GM12878 (cell line): ENCODE measurements at regions of chr1 and their contacts with region 1.

Region 1: DNA sequence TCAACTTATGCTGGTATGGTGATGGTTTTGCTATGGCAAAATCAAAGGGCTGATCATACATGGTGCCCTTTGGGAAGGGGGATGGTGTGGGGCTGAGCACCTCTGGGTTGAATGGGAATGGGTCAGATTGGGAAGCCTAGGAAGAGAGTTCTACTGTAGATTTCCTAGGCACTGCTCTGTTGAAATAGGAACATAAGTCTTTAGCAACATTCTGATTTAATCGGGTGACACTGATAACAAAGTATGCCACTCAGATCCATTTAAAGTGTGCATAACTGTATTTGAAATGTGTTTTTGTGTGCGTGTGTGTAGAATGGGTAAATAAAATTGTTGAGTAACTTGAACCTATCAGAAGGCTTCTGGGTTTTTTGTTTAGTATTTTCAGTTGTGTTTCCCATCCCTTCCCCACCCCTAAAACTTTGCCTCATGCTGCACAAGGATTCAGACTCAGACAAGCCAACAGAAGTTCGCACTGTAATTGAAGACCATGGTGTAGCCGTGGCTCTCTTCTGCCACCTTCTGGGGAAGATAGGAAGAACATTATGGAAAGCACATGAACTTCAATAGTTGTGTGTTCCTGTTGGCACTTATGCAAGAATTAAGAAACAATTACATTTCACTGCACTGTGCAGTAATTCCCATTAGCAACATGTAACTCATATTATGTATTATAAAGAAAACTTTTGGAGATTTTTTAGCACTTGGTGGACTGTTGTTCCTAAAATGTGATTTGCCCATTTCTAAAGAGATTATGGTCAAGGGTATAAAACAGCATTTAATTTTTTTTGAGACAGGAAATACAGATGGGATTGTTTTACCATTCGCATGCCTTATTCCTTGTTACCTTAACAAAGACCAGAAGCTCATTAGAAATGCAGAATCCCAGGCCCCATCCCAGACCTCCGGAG is 10.9 kb upstream of the C4BPB start:
- DNase-seq: peak; percentile 53
- ATAC-seq: peak; percentile 94
- H3K4me3 ChIP-seq: no peak overlapping the region
- H3K27ac ChIP-seq: no peak overlapping the region
- H3K4me1 ChIP-seq: no peaks in the 10 kb centered on the region
- H3K27me3 ChIP-seq: no peaks in the 10 kb centered on the region
- CTCF ChIP-seq: peak; percentile 85 to 95 (median 92); a peak in 5 of 6 replicates
- EP300 ChIP-seq: no peak
- POLR2A ChIP-seq: no peak
- RAD21 ChIP-seq: peak; percentile 94

Region 2: DNA sequence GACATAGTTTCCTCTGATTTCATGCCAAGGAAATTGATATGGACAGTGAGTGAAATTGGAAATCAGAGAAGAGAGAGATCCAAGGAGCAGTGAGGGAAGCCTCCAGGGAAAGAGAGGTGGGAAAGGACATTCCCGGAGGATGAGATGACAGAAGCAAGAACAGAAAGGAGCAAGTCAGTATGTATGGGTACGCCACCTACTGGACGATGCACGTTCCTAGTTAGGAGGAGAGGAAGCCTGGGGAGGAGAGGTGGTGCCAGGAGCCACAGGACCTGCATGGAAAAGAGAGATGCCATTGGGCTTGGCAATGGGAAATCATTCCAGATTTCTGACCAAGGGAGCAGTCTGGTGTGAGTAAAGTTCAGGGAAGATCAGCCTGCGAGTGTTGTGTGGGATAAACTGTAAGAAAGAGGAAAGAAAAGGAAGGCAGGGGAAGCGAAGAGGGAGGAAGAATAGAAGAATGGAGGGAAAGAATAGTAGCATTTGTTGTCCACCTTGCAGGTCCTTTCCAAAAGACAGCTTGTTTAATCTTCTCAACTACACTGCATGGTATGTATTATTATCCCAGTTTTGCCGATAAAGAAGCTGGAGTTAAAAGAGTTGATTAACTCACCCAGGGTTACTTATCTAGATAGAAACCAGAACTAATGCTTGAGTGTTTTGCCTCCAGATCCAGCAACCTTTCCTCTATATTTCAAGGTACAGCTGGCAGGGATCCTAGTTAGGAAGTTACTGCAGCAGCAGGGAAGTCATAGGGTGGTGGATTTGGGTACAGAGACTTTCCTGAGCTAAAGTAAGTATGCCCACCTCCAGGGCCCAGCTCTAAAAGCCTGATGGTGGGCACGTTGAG is 72.5 kb before region 1 on chr1:
- CTCF ChIA-PET with region 1: interaction called, 7 read pairs
- POLR2A ChIA-PET with region 1: no interaction called
- RAD21 ChIA-PET with region 1: no interaction called
- SMC1A ChIA-PET with region 1: interaction called, 4 read pairs
- in situ Hi-C with region 1: no loop called
- intact Hi-C with region 1: loop called (anchors 5 kb)
- DNase-seq: peak; percentile 7
- ATAC-seq: peak; percentile 96
- H3K4me3 ChIP-seq: no peak overlapping the region
- H3K27ac ChIP-seq: no peak overlapping the region
- H3K4me1 ChIP-seq: no peaks in the 10 kb centered on the region
- H3K27me3 ChIP-seq: peaks cover 2 to 3% of the 10 kb centered on the region in 2 experiments
- CTCF ChIP-seq: peak; percentile 78 to 90 (median 85)
- EP300 ChIP-seq: no peak
- POLR2A ChIP-seq: no peak
- RAD21 ChIP-seq: peak; percentile 41; the same call in 1 of the 2 replicates

Region 3: DNA sequence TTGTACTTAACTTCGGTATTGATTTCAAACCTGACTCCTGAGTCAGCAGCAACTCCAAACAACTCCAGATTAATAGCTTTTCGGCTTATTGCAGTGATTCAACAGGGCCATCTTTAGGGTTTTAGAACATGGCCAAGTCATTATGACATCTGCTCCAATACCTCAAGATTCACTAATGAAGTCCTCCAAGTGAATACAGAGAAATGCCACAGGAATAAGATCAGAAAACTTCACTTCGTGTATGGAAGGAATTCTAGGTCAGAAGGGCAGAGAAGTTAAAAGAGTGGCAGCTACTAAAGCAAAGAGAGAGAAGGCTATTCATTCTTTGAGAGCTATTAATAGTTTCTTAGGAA is 37.6 kb before region 1 on chr1:
- CTCF ChIA-PET with region 1: interaction called, 131 read pairs
- POLR2A ChIA-PET with region 1: no interaction called
- RAD21 ChIA-PET with region 1: interaction called, 5 read pairs
- SMC1A ChIA-PET with region 1: interaction called, 66 read pairs
- in situ Hi-C with region 1: no loop called
- intact Hi-C with region 1: loop called (anchors 5 kb)
- DNase-seq: no peak
- ATAC-seq: no peak
- H3K4me3 ChIP-seq: no peak overlapping the region
- H3K27ac ChIP-seq: no peak overlapping the region
- H3K4me1 ChIP-seq: no peaks in the 10 kb centered on the region
- H3K27me3 ChIP-seq: no peaks in the 10 kb centered on the region
- CTCF ChIP-seq: no peak
- EP300 ChIP-seq: no peak
- POLR2A ChIP-seq: no peak
- RAD21 ChIP-seq: no peak

Region 4: GRCh38 chr1:207045466-207045865 is 32.3 kb before region 1 on chr1:
- CTCF ChIA-PET with region 1: interaction called, 131 read pairs
- POLR2A ChIA-PET with region 1: no interaction called
- RAD21 ChIA-PET with region 1: interaction called, 10 read pairs
- SMC1A ChIA-PET with region 1: interaction called, 66 read pairs
- in situ Hi-C with region 1: no loop called
- intact Hi-C with region 1: loop called (anchors 1 kb)
- DNase-seq: no peak
- ATAC-seq: no peak
- H3K4me3 ChIP-seq: no peak overlapping the region
- H3K27ac ChIP-seq: no peak overlapping the region
- H3K4me1 ChIP-seq: no peaks in the 10 kb centered on the region; the same call in 1 of the 2 replicates
- H3K27me3 ChIP-seq: no peaks in the 10 kb centered on the region
- CTCF ChIP-seq: no peak
- EP300 ChIP-seq: no peak
- POLR2A ChIP-seq: no peak
- RAD21 ChIP-seq: no peak

Region 5: GRCh38 chr1:207052911-207053769 is 24.6 kb before region 1 on chr1 and contains the start of gene PFKFB2:
- CTCF ChIA-PET with region 1: interaction called, 131 read pairs
- POLR2A ChIA-PET with region 1: interaction called, 3 read pairs
- RAD21 ChIA-PET with region 1: interaction called, 10 read pairs
- SMC1A ChIA-PET with region 1: interaction called, 66 read pairs
- in situ Hi-C with region 1: no loop called
- intact Hi-C with region 1: loop called (anchors 1 kb)
- DNase-seq: peak; percentile 66
- ATAC-seq: peak; percentile 87
- H3K4me3 ChIP-seq: peak within 1 kb of the TSS; percentile 82
- H3K27ac ChIP-seq: peak within 1 kb of the TSS; percentile 31; the same call in 1 of the 2 replicates
- H3K4me1 ChIP-seq: peaks cover 21% of the 10 kb centered on the region
- H3K27me3 ChIP-seq: no peaks in the 10 kb centered on the region
- CTCF ChIP-seq: peak in 2 of 3 experiments; percentile 18 to 31; a peak in 2 of 6 replicates
- EP300 ChIP-seq: no peak
- POLR2A ChIP-seq: peak; percentile 82
- RAD21 ChIP-seq: no peak
- polyA plus RNA-seq, gene PFKFB2: 0.40 to 0.47 TPM

Region 6: GRCh38 chr1:207058878-207059867 is 18.6 kb before region 1 on chr1:
- CTCF ChIA-PET with region 1: interaction called, 15 read pairs
- POLR2A ChIA-PET with region 1: no interaction called
- RAD21 ChIA-PET with region 1: interaction called, 8 read pairs
- SMC1A ChIA-PET with region 1: interaction called, 6 read pairs
- in situ Hi-C with region 1: no loop called
- intact Hi-C with region 1: no loop called
- DNase-seq: no peak
- ATAC-seq: 0 out of 3 replicates have a peak, but pooled peaks have one; percentile 24
- H3K4me3 ChIP-seq: no peak overlapping the region
- H3K27ac ChIP-seq: no peak overlapping the region
- H3K4me1 ChIP-seq: peaks cover 3% of the 10 kb centered on the region; the same call in 1 of the 2 replicates
- H3K27me3 ChIP-seq: no peaks in the 10 kb centered on the region
- CTCF ChIP-seq: no peak
- EP300 ChIP-seq: no peak
- POLR2A ChIP-seq: no peak
- RAD21 ChIP-seq: no peak

Region 7: DNA sequence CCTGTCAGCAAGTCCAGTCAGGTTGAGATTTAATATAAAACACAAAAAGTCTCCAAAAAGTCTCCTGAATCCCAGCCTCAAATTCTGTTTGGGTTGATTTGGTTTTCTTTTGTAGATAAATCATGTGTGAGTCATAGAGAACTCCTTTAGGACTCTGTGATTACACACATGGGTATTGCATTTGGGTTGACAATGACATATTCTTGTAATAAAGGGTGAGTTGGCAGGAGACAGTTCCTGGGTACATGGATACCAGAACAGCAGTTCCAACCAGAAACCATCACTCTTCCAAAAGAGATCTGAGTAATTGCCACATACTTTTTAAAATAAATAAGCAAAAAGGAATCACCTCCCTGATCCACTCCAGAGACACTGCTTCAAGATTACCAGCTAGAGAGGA is 385.3 kb after region 1 on chr1:
- CTCF ChIA-PET with region 1: no interaction called
- POLR2A ChIA-PET with region 1: no interaction called
- RAD21 ChIA-PET with region 1: no interaction called
- SMC1A ChIA-PET with region 1: no interaction called
- in situ Hi-C with region 1: no loop called
- intact Hi-C with region 1: no loop called
- DNase-seq: no peak
- ATAC-seq: no peak
- H3K4me3 ChIP-seq: no peak overlapping the region
- H3K27ac ChIP-seq: no peak overlapping the region
- H3K4me1 ChIP-seq: no peaks in the 10 kb centered on the region
- H3K27me3 ChIP-seq: no peaks in the 10 kb centered on the region
- CTCF ChIP-seq: no peak
- EP300 ChIP-seq: no peak
- POLR2A ChIP-seq: no peak
- RAD21 ChIP-seq: no peak

Region 8: GRCh38 chr1:207499573-207499972 is 421.8 kb after region 1 on chr1:
- CTCF ChIA-PET with region 1: interaction called, 46 read pairs
- POLR2A ChIA-PET with region 1: no interaction called
- RAD21 ChIA-PET with region 1: interaction called, 5 read pairs
- SMC1A ChIA-PET with region 1: interaction called, 17 read pairs
- in situ Hi-C with region 1: no loop called
- intact Hi-C with region 1: no loop called
- DNase-seq: peak; percentile 64
- ATAC-seq: peak; percentile 81
- H3K4me3 ChIP-seq: no peak overlapping the region
- H3K27ac ChIP-seq: no peak overlapping the region
- H3K4me1 ChIP-seq: peaks cover 6% of the 10 kb centered on the region
- H3K27me3 ChIP-seq: no peaks in the 10 kb centered on the region; a peak in 1 of 4 replicates
- CTCF ChIP-seq: peak; percentile 64 to 85 (median 80)
- EP300 ChIP-seq: no peak
- POLR2A ChIP-seq: no peak
- RAD21 ChIP-seq: peak; percentile 96